ENCODE measurements at regions of chr2 and their contacts with region 1.

Region 1: GRCh38 chr2:218033590-218034496 is 31.0 kb upstream of the TNS1 start:
- DNase-seq: no peak
- H3K4me3 Mint-ChIP-seq: peak overlapping the region; percentile 72
- H3K27ac Mint-ChIP-seq: peak overlapping the region; percentile 14
- H3K4me1 Mint-ChIP-seq: peaks cover 18% of the 10 kb centered on the region
- H3K27me3 Mint-ChIP-seq: peaks cover 2% of the 10 kb centered on the region

Region 2: GRCh38 chr2:218063486-218063885 is 29.6 kb after region 1 on chr2:
- intact Hi-C with region 1: loop called (anchors 1 kb)
- DNase-seq: no peak
- H3K4me3 Mint-ChIP-seq: no peak overlapping the region
- H3K27ac Mint-ChIP-seq: no peak overlapping the region
- H3K4me1 Mint-ChIP-seq: peaks cover 9% of the 10 kb centered on the region
- H3K27me3 Mint-ChIP-seq: peaks cover 11% of the 10 kb centered on the region

Region 3: DNA sequence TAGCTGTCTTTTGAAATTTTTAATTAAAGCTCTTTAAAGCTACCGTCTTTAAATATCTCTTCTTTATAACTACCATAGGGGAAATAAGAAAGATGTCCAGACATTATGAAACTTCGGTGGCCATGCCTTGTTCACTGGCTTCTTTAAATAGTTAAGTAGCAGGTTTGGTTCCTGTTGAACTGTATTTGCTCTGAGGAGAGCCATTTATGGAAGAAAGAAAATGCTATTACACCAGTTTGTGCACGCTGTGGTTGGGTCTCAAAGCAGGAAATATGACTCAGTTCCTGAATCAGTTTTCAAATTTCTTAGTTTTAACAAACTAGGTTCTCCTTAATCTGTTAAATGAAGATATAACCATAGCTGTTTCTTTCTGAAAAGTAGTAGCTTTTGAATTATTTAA is 195.4 kb after region 1 on chr2:
- intact Hi-C with region 1: no loop called
- DNase-seq: peak; percentile 85
- H3K4me3 Mint-ChIP-seq: peak overlapping the region; percentile 80
- H3K27ac Mint-ChIP-seq: peak overlapping the region; percentile 93
- H3K4me1 Mint-ChIP-seq: peaks cover 58% of the 10 kb centered on the region
- H3K27me3 Mint-ChIP-seq: no peaks in the 10 kb centered on the region